Adrenal gland (tissue), 19 donors: ENCODE measurements at regions of chr6 and their contacts with region 1.

Region 1: GRCh38 chr6:166786704-166787293 is 159.7 kb upstream of the RPS6KA2 start:
- DNase-seq: peak in 6 of 7 donors; percentile 23 to 56 (median 34)
- H3K4me3 ChIP-seq: no peak overlapping the region
- H3K27ac ChIP-seq: no peak overlapping the region
- H3K4me1 ChIP-seq: no peaks in the 10 kb centered on the region
- H3K27me3 ChIP-seq: no peaks in the 10 kb centered on the region
- CTCF ChIP-seq: peak; percentile 53 to 85 (median 73)
- POLR2A ChIP-seq: no peak

Region 2: GRCh38 chr6:166728957-166729441 is 57.8 kb before region 1 on chr6:
- intact Hi-C with region 1: no loop called
- DNase-seq: peak in 1 of 7 donors; percentile 43
- H3K4me3 ChIP-seq: no peak overlapping the region
- H3K27ac ChIP-seq: no peak overlapping the region
- H3K4me1 ChIP-seq: no peaks in the 10 kb centered on the region
- H3K27me3 ChIP-seq: no peaks in the 10 kb centered on the region
- CTCF ChIP-seq: no peak
- POLR2A ChIP-seq: no peak

Region 3: GRCh38 chr6:166877906-166878305 is 91.1 kb after region 1 on chr6:
- intact Hi-C with region 1: no loop called
- DNase-seq: no peak
- H3K4me3 ChIP-seq: no peak overlapping the region
- H3K27ac ChIP-seq: no peak overlapping the region
- H3K4me1 ChIP-seq: no peaks in the 10 kb centered on the region
- H3K27me3 ChIP-seq: no peaks in the 10 kb centered on the region
- CTCF ChIP-seq: no peak
- POLR2A ChIP-seq: no peak

Region 4: GRCh38 chr6:166989427-166990032 is 202.7 kb after region 1 on chr6:
- intact Hi-C with region 1: loop called in 1 of 2 experiments (anchors 5 kb)
- DNase-seq: peak in 2 of 7 donors; percentile 25 to 26
- H3K4me3 ChIP-seq: no peak overlapping the region
- H3K27ac ChIP-seq: no peak overlapping the region
- H3K4me1 ChIP-seq: no peaks in the 10 kb centered on the region
- H3K27me3 ChIP-seq: no peaks in the 10 kb centered on the region
- CTCF ChIP-seq: peak; percentile 11 to 65 (median 48)
- POLR2A ChIP-seq: no peak

Region 5: GRCh38 chr6:167093922-167094432 is 307.2 kb after region 1 on chr6:
- intact Hi-C with region 1: no loop called
- DNase-seq: no peak
- H3K4me3 ChIP-seq: no peak overlapping the region
- H3K27ac ChIP-seq: no peak overlapping the region
- H3K4me1 ChIP-seq: no peaks in the 10 kb centered on the region
- H3K27me3 ChIP-seq: no peaks in the 10 kb centered on the region
- CTCF ChIP-seq: no peak
- POLR2A ChIP-seq: no peak

Region 6: DNA sequence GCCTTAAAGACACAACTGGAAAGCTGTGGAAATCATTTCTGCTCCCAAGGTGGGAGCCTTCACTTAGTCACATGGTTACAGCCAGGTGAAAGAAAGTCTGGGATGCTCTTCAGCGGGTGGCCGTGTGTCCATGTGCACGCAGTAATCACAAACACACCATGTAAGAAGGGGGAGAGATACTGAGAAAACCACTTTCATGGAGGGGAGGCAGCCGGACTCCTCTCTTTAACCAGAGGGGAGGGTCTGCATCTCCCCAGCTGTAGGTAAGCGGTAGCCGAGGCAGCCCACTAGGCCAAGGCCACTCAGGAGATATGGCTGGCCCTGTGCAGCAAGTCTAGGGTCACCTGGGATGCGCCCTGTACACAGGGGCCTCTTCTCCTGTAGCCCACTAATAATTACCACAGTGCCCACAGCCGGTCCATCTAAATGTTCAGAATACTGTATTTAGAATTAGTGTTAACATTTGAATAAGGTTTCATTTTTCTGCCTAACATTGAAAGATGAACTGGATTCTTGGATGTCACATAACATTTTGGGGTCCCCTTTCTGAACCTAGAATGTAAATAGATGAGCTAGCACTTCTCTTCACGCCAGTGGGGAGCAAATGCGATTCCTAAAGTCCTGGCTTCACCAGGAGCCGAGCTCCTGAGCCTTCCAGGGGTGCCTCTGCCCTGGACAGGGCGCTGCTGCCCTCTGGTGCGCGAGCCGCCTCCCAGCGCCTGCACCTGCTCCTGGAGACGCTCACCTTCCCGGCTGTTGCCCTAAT is 355.1 kb after region 1 on chr6:
- intact Hi-C with region 1: loop called (anchors 5 kb)
- DNase-seq: peak; percentile 41 to 72 (median 59)
- H3K4me3 ChIP-seq: no peak overlapping the region
- H3K27ac ChIP-seq: no peak overlapping the region
- H3K4me1 ChIP-seq: peaks cover 0 to 3% of the 10 kb centered on the region in 2 donors
- H3K27me3 ChIP-seq: no peaks in the 10 kb centered on the region
- CTCF ChIP-seq: peak; percentile 61 to 84 (median 80)
- POLR2A ChIP-seq: no peak

Region 7: DNA sequence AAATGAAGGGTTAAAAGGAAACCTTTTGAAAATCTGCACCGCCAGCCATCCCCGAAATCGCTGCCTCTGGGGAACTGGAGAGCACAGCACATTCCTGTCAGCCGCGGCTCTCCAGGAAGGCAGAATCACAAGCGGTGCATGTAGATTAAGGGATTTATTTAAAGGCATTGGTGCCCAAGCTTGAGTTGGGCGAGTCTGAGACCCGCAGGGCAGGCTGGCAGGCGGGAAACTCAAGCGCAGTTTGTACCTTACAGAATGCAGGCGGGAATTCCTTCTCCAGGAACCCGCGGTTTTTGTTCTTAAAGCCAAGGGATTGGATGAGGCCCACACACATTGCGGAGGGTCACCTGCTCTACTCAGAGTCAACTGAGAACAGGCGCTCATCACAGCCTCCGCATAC is 360.2 kb after region 1 on chr6:
- intact Hi-C with region 1: loop called (anchors 5 kb)
- DNase-seq: no peak
- H3K4me3 ChIP-seq: no peak overlapping the region
- H3K27ac ChIP-seq: no peak overlapping the region
- H3K4me1 ChIP-seq: peaks cover 0 to 2% of the 10 kb centered on the region in 2 donors
- H3K27me3 ChIP-seq: no peaks in the 10 kb centered on the region
- CTCF ChIP-seq: no peak
- POLR2A ChIP-seq: no peak